Calu3 (cell line): ENCODE measurements at regions of chr12 and their contacts with region 1.

Region 1: GRCh38 chr12:62983599-62984022 is 48.7 kb upstream of the PPM1H start:
- DNase-seq: peak; percentile 55
- H3K4me3 Mint-ChIP-seq: no peak overlapping the region
- H3K27ac Mint-ChIP-seq: no peak overlapping the region
- H3K4me1 Mint-ChIP-seq: peaks cover 9% of the 10 kb centered on the region
- H3K27me3 Mint-ChIP-seq: no peaks in the 10 kb centered on the region
- CTCF ChIP-seq: peak; percentile 58

Region 2: DNA sequence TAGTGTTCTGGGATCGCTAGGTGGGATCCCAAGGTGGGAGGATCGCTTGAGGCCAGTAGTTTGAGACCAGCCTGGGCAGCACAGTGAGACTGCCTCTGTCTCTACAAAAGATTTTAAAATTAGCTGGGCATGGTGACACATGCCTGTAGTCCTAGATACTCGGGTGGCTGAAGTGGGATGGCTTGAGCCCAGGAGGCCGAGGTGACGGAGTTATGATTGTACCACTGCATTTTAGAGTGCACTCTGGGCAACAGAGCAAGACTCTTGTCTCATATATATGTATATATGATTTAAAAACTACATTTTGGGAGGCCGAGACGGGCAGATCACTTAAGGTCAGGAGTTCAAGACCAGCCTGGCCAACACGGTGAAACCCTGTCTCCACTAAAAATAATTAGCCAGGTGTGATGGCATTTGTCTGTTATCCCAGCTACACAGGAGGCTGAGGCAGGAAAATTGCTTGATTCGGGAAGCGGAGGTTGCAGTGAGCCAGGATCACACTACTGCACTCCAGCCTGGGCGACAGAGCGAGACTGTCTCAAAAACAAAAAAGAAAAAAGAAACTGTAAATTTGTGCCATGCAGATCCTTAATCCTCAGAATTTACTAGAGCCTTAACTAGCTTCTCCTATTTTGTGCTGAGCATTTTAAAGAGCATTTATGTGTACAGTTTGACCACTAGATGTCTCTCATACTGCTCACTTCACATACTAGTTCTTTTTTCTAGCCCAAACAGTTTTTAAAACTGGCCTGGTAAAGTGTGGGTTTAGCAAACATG is 402.1 kb before region 1 on chr12:
- CTCF ChIA-PET with region 1: no interaction called
- intact Hi-C with region 1: loop called (anchors 10 kb)
- DNase-seq: no peak
- H3K4me3 Mint-ChIP-seq: no peak overlapping the region
- H3K27ac Mint-ChIP-seq: no peak overlapping the region
- H3K4me1 Mint-ChIP-seq: no peaks in the 10 kb centered on the region
- H3K27me3 Mint-ChIP-seq: no peaks in the 10 kb centered on the region
- CTCF ChIP-seq: peak; percentile 27

Region 3: GRCh38 chr12:62827042-62827441 is 156.6 kb before region 1 on chr12:
- CTCF ChIA-PET with region 1: no interaction called
- intact Hi-C with region 1: no loop called
- DNase-seq: no peak
- H3K4me3 Mint-ChIP-seq: no peak overlapping the region
- H3K27ac Mint-ChIP-seq: no peak overlapping the region
- H3K4me1 Mint-ChIP-seq: no peaks in the 10 kb centered on the region
- H3K27me3 Mint-ChIP-seq: no peaks in the 10 kb centered on the region
- CTCF ChIP-seq: no peak

Region 4: GRCh38 chr12:62934799-62935674 is 48.6 kb before region 1 on chr12 and contains the start of gene PPM1H:
- CTCF ChIA-PET with region 1: interaction called, 7 read pairs
- intact Hi-C with region 1: loop called (anchors 2 kb)
- DNase-seq: peak; percentile 99
- H3K4me3 Mint-ChIP-seq: peak within 1 kb of the TSS; percentile 76
- H3K27ac Mint-ChIP-seq: peak within 1 kb of the TSS; percentile 90
- H3K4me1 Mint-ChIP-seq: peaks cover 34% of the 10 kb centered on the region
- H3K27me3 Mint-ChIP-seq: no peaks in the 10 kb centered on the region
- CTCF ChIP-seq: peak; percentile 93
- total RNA-seq, gene PPM1H: 36.7 and 39.1 TPM in 2 replicates

Region 5: DNA sequence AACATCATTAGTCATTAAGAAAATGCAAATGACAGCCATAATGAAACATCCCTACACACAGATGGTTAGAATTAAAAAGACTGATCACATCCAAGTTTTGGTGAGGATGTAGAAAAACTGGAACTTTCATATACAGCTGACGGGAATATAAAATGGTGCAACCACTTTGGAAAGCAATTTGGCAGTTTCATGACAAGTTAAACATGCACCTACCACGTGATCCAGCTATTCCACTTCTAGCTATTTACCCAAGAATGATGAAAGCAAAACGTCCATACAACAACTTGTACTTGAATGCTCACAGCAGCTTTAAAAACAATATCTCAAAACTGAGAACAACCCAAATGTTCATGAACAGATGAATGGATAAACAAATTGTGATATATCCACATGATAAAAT is 245.2 kb after region 1 on chr12:
- CTCF ChIA-PET with region 1: no interaction called
- intact Hi-C with region 1: no loop called
- DNase-seq: no peak
- H3K4me3 Mint-ChIP-seq: no peak overlapping the region
- H3K27ac Mint-ChIP-seq: no peak overlapping the region
- H3K4me1 Mint-ChIP-seq: peaks cover 9% of the 10 kb centered on the region
- H3K27me3 Mint-ChIP-seq: no peaks in the 10 kb centered on the region
- CTCF ChIP-seq: no peak